Activated CD8-positive, alpha-beta T cell treated with anti-CD3 and anti-CD28 coated beads, Interleukin-2, amount 10 ng/mL, durations not matched to agents 7 days and 5 days (primary cell): ENCODE measurements at regions of chr15 and their contacts with region 1.

Region 1: GRCh38 chr15:40038638-40039543 is at the start of gene SRP14:
- DNase-seq: peak; percentile 95
- ATAC-seq: peak; percentile 95
- H3K4me3 Mint-ChIP-seq: peak within 1 kb of the TSS; percentile 97
- H3K27ac Mint-ChIP-seq: peak within 1 kb of the TSS; percentile 95
- H3K4me1 Mint-ChIP-seq: peaks cover 50% of the 10 kb centered on the region
- H3K27me3 Mint-ChIP-seq: no peaks in the 10 kb centered on the region
- total RNA-seq, gene SRP14: 178 to 182 TPM

Region 2: DNA sequence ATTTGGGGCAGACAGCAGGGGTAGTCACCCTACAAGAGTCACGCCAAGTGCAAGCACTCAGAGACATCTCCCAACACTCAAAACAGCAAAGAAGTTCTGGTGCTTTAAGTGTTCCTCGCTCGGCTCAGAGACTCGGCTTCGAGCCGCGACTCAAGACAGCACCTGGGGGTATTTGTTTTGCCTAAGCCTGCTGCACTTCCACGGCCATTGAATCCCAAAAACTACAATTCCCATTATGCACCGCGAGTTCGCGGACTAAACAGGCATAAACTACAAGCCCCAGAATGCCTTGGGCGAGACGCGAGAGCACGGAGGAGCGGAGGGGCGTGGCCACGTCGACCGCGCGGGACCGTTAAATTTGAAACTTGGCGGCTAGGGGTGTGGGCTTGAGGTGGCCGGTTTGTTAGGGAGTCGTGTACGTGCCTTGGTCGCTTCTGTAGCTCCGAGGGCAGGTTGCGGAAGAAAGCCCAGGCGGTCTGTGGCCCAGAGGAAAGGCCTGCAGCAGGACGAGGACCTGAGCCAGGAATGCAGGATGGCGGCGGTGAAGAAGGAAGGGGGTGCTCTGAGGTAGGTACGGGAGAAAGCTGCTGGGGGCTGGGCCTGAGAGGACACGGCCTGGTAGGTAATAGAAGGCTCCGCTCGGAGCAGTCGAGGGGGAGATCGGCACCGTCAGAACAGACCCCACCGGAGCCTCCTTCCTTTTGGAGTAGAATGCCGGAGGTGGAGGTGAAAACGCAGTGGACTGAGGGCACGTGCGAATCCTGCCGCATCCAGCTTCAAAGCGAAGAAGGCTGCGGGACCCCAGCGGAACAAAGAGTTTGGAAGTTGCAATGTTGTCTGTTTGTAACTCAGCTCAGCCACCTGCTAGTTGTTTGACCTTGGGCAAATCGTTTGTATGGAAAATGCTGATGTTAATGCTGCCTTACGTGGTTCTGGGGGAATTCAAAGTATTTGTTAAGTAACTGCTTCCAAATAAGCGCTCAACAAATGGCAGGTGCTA is 122.1 kb after region 1 on chr15 and contains the start of gene BUB1B:
- CTCF ChIA-PET with region 1: interaction called, 7 read pairs
- POLR2A ChIA-PET with region 1: interaction called, 12 read pairs
- DNase-seq: peak; percentile 97
- ATAC-seq: peak; percentile 95
- H3K4me3 Mint-ChIP-seq: no peak within 1 kb of the TSS
- H3K27ac Mint-ChIP-seq: no peak within 1 kb of the TSS
- H3K4me1 Mint-ChIP-seq: peaks cover 10% of the 10 kb centered on the region
- H3K27me3 Mint-ChIP-seq: no peaks in the 10 kb centered on the region
- total RNA-seq, gene BUB1B: 91.9 to 94.9 TPM